Posterior vena cava (tissue), 2 donors: ENCODE measurements at regions of chr2 and their contacts with region 1.

Region 1: DNA sequence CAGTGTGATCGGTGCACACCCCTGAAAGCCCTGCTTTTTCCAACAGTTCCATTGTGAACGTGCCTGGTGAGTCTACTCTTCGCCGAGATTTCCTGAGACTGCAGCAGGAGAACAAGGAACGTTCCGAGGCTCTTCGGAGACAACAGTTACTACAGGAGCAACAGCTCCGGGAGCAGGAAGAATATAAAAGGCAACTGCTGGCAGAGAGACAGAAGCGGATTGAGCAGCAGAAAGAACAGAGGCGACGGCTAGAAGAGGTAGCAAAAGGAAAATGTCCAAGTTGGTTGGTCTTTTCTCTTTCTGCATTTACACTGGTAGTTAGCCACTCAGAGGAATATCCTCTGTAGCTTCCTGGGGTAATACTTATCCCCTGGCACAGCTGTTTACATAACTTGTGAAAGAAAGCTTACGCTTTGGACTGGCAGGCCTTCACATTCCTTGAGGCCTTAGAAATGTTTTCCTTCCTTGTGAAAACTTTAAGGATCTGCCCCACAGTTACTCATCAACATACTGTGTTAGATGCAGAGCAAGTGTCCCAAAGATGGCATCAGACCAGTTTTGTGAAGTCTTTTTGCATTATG is 146.6 kb downstream of the MAP4K4 start:
- DNase-seq: no peak

Region 2: DNA sequence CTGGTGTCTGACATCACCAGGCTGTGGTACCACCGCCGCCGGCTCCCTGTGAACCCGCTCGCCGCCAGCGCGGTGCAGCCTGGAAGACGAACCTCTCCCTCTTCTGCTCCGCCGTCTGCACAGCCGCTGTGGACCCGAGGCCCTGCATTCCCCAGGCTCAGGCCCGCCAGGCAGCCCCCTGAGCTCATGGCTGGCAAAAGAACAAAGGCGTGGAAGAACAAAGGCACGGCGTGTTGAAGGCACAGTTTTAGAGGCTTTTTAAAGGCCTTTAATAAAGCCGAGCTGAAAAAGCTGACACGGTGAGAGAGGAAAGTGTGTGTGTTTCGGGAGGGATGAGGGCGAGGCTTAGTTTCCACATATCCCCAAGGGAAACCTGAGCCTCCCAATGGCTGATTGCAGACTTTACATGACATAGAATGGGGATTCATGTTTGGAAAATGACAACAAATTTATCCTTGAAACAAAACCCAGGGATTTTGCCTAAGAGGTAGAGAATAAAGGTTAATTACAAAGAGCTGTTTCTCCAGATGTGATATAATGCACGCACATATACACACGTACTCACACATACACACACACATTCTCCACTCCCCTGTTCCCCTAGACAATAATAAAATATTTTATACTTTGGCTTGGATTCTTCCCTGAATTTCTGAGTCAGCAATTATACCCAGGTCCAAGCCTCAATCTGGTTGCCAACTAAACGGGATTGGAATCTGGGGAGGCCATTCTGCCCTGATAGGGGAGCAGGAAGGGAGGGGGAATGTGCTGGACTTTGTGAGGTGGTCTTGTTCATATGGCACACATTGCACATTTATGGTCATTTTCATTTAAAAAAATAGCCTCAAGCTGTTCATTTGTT is 408.9 kb before region 1 on chr2:
- intact Hi-C with region 1: loop called in 1 of 2 experiments (anchors 10 kb)
- DNase-seq: no peak